KBM-7 (cell line): ENCODE measurements at regions of chr15 and their contacts with region 1.

Region 1: GRCh38 chr15:79896637-79897379 is at the start of gene MTHFS:
- DNase-seq: peak; percentile 95

Region 2: DNA sequence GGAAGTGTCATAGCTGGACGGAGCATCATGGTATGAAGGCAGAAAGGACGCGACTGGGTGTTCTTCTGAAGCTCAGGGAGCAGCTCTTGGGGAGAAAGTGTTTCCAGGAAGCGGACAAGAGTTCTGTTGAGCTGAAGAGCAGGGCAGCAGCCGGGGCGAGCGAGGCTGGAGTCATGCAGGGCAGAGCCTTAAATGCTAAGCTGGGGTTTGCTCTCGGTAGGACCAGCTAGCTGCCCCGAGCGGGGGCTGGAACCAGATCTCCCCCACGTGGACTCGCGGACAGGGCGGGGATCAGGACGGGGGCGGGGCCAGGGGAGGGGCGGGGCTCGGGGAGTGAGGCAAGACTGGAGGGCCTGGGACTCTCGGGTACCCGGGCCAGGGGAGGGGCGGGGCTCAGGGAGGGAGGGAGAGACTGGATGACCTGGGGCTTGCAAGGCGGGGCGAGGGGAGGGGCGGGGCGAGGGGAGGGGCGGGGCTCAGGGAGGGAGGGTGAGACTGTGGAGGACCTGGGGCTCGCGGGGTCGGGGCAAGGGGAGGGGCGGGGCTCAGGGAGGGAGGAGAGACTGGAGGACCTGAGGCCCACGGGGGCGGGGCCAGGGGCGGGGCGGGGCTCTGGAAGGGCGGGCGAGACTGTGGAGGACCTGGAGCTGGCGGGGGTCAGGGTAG is 255.5 kb after region 1 on chr15:
- in situ Hi-C with region 1: loop called (anchors 25 kb)
- DNase-seq: peak; percentile 85